ENCODE measurements at regions of chr9 and their contacts with region 1.

Region 1: DNA sequence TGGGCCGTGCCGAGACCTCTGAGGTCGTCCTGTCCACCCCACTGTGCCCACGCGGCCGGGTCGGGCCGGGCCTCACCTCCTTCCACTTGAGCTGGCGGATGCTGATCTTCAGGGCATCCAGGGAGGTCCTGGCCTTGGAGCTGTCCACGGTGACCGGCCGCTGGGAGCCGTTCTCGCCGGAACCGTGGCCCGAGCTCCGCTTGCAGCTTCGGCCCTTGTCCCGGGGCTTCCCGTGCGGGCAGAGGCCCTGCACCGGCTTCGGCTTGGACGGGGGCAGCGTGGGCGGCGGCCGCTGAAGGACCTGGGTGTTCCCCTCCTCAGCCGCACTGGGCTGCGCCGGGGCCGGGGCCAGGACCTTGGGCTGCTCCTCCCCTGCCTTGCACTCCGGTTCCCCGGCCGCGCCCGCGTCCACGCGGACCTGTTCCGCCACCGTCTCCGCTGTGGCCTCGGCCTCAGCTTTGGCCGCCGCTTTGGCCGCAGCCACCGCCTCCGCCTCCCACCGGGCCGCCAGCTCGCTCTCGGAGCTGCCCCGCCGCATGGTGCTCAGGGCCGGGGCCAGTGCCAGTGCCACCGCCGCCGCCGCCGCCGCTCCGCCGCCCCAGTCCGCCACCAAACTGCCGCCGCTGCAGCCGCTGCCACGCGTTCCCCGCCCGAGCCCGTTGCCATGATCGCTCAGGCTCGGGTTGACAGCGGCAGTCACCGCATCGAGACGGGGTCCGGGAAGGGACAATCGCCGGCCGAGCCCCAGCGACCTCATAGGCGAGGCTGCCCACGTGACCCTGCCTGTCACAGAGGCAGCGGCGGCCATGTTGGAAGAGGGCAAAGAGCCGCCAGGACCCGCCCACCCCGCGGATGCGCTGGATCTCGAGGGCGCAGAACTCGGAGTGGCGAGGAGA is at the start of gene TTLL11:
- DNase-seq: peak; percentile 93 to 96 (median 95)
- ATAC-seq: peak; percentile 98
- H3K4me3 ChIP-seq: peak within 1 kb of the TSS; percentile 54
- H3K4me3 Mint-ChIP-seq: peak within 1 kb of the TSS; percentile 85 to 99 (median 92)
- H3K27ac ChIP-seq: peak within 1 kb of the TSS; percentile 62
- H3K27ac Mint-ChIP-seq: peak within 1 kb of the TSS; percentile 2 to 88 (median 76)
- H3K4me1 ChIP-seq: peaks cover 10 to 26% of the 10 kb centered on the region in 2 donors
- H3K4me1 Mint-ChIP-seq: peaks cover 25 to 55% (median 46%) of the 10 kb centered on the region in 7 donors
- H3K27me3 ChIP-seq: no peaks in the 10 kb centered on the region
- H3K27me3 Mint-ChIP-seq: peaks cover 0 to 25% (median 0%) of the 10 kb centered on the region in 5 donors
- total RNA-seq, gene TTLL11: 3.0 to 6.2 (median 4.4) TPM

Region 2: DNA sequence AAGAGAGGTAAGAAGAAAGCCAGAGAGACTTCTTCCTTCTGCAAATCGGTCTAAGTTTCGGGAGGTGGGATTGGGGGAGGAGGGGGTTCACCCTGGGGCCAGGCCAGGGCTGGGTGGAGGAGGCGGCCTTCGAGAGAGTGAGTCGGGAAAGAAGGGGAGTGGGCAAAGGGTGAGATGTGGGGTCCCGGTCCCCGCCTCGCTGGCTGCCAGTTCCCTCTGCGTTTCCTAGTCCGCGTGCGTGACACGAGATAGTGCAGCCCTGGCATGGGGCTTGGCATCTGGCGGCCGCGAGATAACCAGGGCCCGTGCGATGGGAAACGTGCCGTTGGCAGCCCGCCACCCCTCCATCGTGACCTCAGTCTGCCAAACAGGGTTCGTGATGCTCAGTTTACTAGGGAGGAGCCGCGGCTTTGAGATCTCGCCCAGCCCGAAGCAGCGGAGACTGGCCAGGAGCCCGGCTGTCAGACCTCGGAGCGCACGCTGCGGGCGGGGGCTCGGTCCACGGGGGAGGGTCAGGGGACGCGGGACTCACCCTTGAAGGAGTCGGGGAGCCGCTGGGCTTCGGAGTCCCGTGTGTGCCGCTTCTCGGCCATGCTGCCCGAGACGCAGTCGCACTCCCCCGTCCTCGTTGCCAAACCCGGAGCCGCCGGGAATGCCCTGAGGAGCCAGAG is 723.1 kb before region 1 on chr9 and contains the start of gene STOM:
- CTCF ChIA-PET with region 1: no interaction called
- POLR2A ChIA-PET with region 1: no interaction called
- intact Hi-C with region 1: loop called in 1 of 2 experiments (anchors 2 kb)
- DNase-seq: peak in 3 of 9 donors; percentile 60 to 66 (median 65)
- ATAC-seq: peak; percentile 58
- H3K4me3 ChIP-seq: peak within 1 kb of the TSS; percentile 91
- H3K4me3 Mint-ChIP-seq: peak within 1 kb of the TSS; percentile 88 to 99 (median 94)
- H3K27ac ChIP-seq: peak within 1 kb of the TSS; percentile 76
- H3K27ac Mint-ChIP-seq: peak within 1 kb of the TSS; percentile 87 to 99 (median 96)
- H3K4me1 ChIP-seq: peaks cover 18 to 24% of the 10 kb centered on the region in 2 donors
- H3K4me1 Mint-ChIP-seq: peaks cover 22 to 57% (median 36%) of the 10 kb centered on the region in 7 donors
- H3K27me3 ChIP-seq: no peaks in the 10 kb centered on the region
- H3K27me3 Mint-ChIP-seq: no peaks in the 10 kb centered on the region
- total RNA-seq, gene STOM: 8.8 to 59.8 (median 16.1) TPM

Region 3: DNA sequence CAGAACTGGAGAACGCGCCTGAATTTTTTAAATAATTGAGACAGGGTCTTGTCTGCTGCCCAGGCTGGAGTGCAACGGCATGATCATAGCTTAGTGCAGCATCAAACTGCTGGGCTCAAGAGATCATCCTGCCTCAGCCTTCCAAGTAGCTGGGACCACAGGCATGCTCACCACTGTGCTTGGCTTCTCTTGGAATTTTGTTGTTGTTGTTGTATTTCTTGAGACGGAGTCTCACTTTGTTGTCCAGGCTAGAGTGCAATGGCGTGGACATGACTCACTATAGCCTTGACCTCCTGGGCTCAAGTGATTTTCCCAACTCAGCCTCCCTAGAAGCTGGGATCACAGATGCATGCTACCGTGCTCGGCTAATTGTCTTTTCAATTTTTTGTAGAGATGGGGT is 499.8 kb before region 1 on chr9:
- CTCF ChIA-PET with region 1: no interaction called
- POLR2A ChIA-PET with region 1: no interaction called
- intact Hi-C with region 1: no loop called
- DNase-seq: no peak
- ATAC-seq: no peak
- H3K4me3 ChIP-seq: no peak overlapping the region
- H3K4me3 Mint-ChIP-seq: no peak overlapping the region
- H3K27ac ChIP-seq: no peak overlapping the region
- H3K27ac Mint-ChIP-seq: no peak overlapping the region
- H3K4me1 ChIP-seq: no peaks in the 10 kb centered on the region
- H3K4me1 Mint-ChIP-seq: no peaks in the 10 kb centered on the region
- H3K27me3 ChIP-seq: peaks cover 0 to 3% of the 10 kb centered on the region in 2 donors
- H3K27me3 Mint-ChIP-seq: peaks cover 34 to 67% (median 58%) of the 10 kb centered on the region in 5 donors

Region 4: GRCh38 chr9:122005597-122005996 is 87.3 kb before region 1 on chr9:
- CTCF ChIA-PET with region 1: no interaction called
- POLR2A ChIA-PET with region 1: no interaction called
- intact Hi-C with region 1: no loop called
- DNase-seq: no peak
- ATAC-seq: no peak
- H3K4me3 ChIP-seq: no peak overlapping the region
- H3K4me3 Mint-ChIP-seq: no peak overlapping the region
- H3K27ac ChIP-seq: no peak overlapping the region
- H3K27ac Mint-ChIP-seq: no peak overlapping the region
- H3K4me1 ChIP-seq: no peaks in the 10 kb centered on the region
- H3K4me1 Mint-ChIP-seq: no peaks in the 10 kb centered on the region
- H3K27me3 ChIP-seq: no peaks in the 10 kb centered on the region
- H3K27me3 Mint-ChIP-seq: peaks cover 0 to 3% (median 0%) of the 10 kb centered on the region in 5 donors

Region 5: GRCh38 chr9:122213589-122214413 is 120.9 kb after region 1 on chr9:
- CTCF ChIA-PET with region 1: no interaction called
- POLR2A ChIA-PET with region 1: no interaction called
- intact Hi-C with region 1: loop called in 1 of 2 experiments (anchors 5 kb)
- DNase-seq: peak; percentile 11 to 66 (median 28)
- ATAC-seq: peak; percentile 75
- H3K4me3 ChIP-seq: peak overlapping the region; percentile 35
- H3K4me3 Mint-ChIP-seq: peak overlapping the region; percentile 61 to 83 (median 76)
- H3K27ac ChIP-seq: no peak overlapping the region
- H3K27ac Mint-ChIP-seq: no peak overlapping the region
- H3K4me1 ChIP-seq: peaks cover 0 to 10% of the 10 kb centered on the region in 2 donors
- H3K4me1 Mint-ChIP-seq: peaks cover 13 to 25% (median 20%) of the 10 kb centered on the region in 7 donors
- H3K27me3 ChIP-seq: peaks cover 6 to 22% of the 10 kb centered on the region in 2 donors
- H3K27me3 Mint-ChIP-seq: peaks cover 66 to 90% (median 75%) of the 10 kb centered on the region in 5 donors

Region 6: DNA sequence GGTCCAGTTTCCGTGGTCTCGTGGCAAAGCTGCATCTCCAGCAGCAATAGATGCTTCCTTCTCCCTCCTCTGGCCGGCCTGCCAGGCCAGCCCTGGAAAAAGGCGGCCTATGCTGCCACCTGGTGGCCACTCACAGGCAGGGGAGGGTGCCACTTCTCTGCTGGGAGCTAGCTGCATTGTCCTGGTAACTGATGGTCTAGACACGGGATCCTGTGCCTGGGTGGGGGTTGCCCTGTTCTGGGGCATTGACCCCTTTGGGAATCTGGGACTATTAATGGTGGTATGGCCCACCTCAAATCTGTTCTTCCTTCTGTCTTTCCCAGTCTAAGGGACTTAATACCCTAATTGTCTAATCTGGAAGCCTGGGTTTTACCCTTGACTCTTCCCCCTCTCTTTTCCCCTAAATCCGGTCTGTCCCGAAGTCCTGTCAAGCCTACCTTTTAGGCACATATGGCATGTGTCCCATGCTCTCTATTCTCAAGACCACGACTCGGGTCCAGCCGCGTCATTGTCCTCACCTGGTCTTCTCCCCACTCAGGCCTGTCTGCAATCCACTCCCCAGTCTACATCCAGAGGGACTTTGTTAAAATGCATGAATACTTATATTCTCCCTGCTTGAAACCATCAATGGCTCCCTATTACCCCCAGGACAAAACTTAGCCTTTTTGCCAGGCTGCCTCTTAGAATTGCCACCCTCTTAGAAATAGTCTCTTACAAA is 257.9 kb after region 1 on chr9:
- CTCF ChIA-PET with region 1: interaction called, 58 read pairs
- POLR2A ChIA-PET with region 1: no interaction called
- intact Hi-C with region 1: loop called (anchors 1 kb)
- DNase-seq: peak; percentile 46 to 84 (median 66)
- ATAC-seq: peak; percentile 88
- H3K4me3 ChIP-seq: no peak overlapping the region
- H3K4me3 Mint-ChIP-seq: peak overlapping the region in 1 of 10 donors; percentile 13
- H3K27ac ChIP-seq: no peak overlapping the region
- H3K27ac Mint-ChIP-seq: no peak overlapping the region
- H3K4me1 ChIP-seq: no peaks in the 10 kb centered on the region
- H3K4me1 Mint-ChIP-seq: peaks cover 7 to 19% (median 14%) of the 10 kb centered on the region in 7 donors
- H3K27me3 ChIP-seq: peaks cover 0 to 3% of the 10 kb centered on the region in 2 donors
- H3K27me3 Mint-ChIP-seq: peaks cover 28 to 39% (median 34%) of the 10 kb centered on the region in 5 donors

Region 7: GRCh38 chr9:122827761-122828093 is 734.9 kb after region 1 on chr9:
- CTCF ChIA-PET with region 1: no interaction called
- POLR2A ChIA-PET with region 1: no interaction called
- intact Hi-C with region 1: loop called in 1 of 2 experiments (anchors 1 kb)
- DNase-seq: peak in 1 of 9 donors; percentile 11
- ATAC-seq: no peak
- H3K4me3 ChIP-seq: peak overlapping the region; percentile 97
- H3K4me3 Mint-ChIP-seq: peak overlapping the region; percentile 97 to 100 (median 99)
- H3K27ac ChIP-seq: peak overlapping the region; percentile 99
- H3K27ac Mint-ChIP-seq: peak overlapping the region; percentile 92 to 98 (median 98)
- H3K4me1 ChIP-seq: peaks cover 9 to 11% of the 10 kb centered on the region in 2 donors
- H3K4me1 Mint-ChIP-seq: peaks cover 23 to 51% (median 42%) of the 10 kb centered on the region in 7 donors
- H3K27me3 ChIP-seq: no peaks in the 10 kb centered on the region
- H3K27me3 Mint-ChIP-seq: no peaks in the 10 kb centered on the region

Region 8: DNA sequence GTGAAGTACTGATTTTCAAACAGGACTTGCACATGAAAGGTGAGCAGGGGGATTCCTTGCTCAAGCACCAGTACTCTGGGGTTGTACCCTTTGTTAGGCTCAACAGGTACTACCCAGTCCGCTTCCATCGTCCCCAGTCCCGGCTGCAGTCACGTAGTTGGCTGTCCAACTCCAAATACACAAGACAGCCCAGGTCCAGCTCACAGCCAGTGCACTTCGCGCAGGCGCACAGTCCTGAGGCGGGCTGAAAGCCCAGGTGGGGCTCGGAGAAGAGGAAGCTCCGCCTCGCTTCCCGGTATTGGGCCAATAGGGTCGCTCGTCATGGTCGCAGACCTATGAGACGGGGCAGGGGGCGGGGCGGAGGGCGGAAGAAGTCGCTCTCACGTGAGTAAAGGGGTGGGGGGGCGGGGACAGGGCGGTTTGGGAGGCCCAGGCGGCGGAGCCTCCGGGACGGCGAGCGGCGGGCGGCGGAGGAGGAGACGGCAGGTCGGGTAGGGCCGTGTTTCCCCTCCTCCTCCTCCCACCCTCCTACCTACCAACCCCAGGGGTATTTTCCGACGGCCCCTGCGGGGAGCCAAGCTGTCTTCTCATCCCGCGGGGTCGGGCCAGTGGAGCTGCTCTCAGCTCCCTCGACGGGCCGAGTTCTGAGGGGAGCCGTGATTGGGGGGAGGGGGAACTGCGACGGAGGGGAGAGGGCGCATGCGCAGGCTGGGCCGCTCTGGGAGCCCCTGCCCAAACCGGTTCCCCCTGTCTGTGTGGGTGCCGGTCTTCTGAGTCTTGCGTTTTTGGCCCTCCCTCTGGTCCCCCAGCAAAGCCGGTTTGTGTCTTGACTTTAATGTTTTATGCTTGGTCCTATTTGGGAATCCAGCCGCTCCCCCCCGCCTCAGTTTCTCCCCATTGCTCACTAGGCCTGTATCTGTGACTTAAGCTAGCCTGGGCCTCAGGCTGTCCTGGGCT is 848.0 kb after region 1 on chr9 and contains the start of gene RABGAP1:
- CTCF ChIA-PET with region 1: no interaction called
- POLR2A ChIA-PET with region 1: no interaction called
- intact Hi-C with region 1: loop called in 1 of 2 experiments (anchors 2 kb)
- DNase-seq: peak; percentile 89 to 98 (median 94)
- ATAC-seq: peak; percentile 99
- H3K4me3 ChIP-seq: peak within 1 kb of the TSS; percentile 84
- H3K4me3 Mint-ChIP-seq: peak within 1 kb of the TSS; percentile 90 to 99 (median 96)
- H3K27ac ChIP-seq: peak within 1 kb of the TSS; percentile 89
- H3K27ac Mint-ChIP-seq: peak within 1 kb of the TSS; percentile 80 to 98 (median 94)
- H3K4me1 ChIP-seq: peaks cover 10 to 12% of the 10 kb centered on the region in 2 donors
- H3K4me1 Mint-ChIP-seq: peaks cover 18 to 47% (median 39%) of the 10 kb centered on the region in 7 donors
- H3K27me3 ChIP-seq: no peaks in the 10 kb centered on the region
- H3K27me3 Mint-ChIP-seq: no peaks in the 10 kb centered on the region
- total RNA-seq, gene RABGAP1: 33.8 to 45.7 (median 45.0) TPM

Region 9: DNA sequence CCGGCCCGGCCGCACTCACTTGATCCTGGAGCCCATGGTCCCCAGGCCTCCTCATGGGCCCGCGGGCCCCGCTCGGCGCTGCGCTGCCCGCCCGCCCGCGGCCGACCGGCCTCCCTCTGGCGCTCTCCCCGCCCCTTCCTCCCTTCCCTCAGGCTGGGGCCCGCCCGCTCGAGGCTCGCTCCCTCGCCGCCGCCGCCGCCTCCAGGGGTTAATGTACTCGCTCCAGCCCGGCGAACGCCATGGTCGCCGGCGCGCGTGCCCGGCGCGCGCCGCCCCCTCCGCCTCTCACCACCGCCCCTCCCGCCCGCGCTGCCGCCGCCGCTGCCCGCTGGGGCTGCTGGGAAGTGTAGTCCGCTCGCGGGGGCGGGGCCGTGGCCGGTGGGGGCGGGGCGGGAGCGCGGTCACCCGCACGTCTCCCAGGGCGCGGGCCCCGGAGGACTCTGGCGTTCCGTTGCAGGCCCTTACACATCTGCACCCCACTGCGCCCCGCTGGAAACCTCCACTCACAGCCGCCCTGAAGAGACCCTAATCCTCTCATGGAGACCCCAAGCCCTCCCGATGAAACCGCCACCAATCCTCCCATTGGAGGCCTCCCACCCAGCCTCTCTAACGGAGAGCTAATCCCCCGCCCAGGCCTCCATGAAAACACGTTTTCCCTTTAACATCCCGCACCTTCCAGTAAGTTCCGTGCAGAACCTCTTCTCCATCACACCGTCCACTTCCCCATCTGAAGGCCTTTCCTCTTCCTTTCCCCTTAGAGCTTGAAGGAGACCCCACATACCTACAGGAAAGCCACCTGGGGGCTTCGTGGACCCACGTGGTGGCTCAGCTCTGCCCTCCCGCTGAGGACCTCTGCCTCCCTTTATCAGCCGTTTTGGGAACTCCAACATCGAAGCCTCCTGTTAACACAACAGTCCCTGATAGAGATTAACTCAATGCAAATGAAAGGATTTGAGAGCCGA is 1837.3 kb after region 1 on chr9 and contains the start of gene DENND1A:
- CTCF ChIA-PET with region 1: no interaction called
- POLR2A ChIA-PET with region 1: no interaction called
- intact Hi-C with region 1: loop called in 1 of 2 experiments (anchors 5 kb)
- DNase-seq: peak; percentile 69 to 89 (median 79)
- ATAC-seq: peak; percentile 96
- H3K4me3 ChIP-seq: peak within 1 kb of the TSS; percentile 58
- H3K4me3 Mint-ChIP-seq: peak within 1 kb of the TSS; percentile 84 to 96 (median 88)
- H3K27ac ChIP-seq: peak within 1 kb of the TSS; percentile 73
- H3K27ac Mint-ChIP-seq: peak within 1 kb of the TSS; percentile 76 to 95 (median 88)
- H3K4me1 ChIP-seq: peaks cover 7 to 20% of the 10 kb centered on the region in 2 donors
- H3K4me1 Mint-ChIP-seq: peaks cover 32 to 48% (median 45%) of the 10 kb centered on the region in 7 donors
- H3K27me3 ChIP-seq: no peaks in the 10 kb centered on the region
- H3K27me3 Mint-ChIP-seq: peaks cover 0 to 14% (median 0%) of the 10 kb centered on the region in 5 donors
- total RNA-seq, gene DENND1A: 14.5 to 41.1 (median 17.1) TPM

Measured in naive thymus-derived CD4-positive, alpha-beta T cell (primary cell).